Naive thymus-derived CD4-positive, alpha-beta T cell (primary cell): ENCODE measurements at regions of chr15 and their contacts with region 1.

Region 1: DNA sequence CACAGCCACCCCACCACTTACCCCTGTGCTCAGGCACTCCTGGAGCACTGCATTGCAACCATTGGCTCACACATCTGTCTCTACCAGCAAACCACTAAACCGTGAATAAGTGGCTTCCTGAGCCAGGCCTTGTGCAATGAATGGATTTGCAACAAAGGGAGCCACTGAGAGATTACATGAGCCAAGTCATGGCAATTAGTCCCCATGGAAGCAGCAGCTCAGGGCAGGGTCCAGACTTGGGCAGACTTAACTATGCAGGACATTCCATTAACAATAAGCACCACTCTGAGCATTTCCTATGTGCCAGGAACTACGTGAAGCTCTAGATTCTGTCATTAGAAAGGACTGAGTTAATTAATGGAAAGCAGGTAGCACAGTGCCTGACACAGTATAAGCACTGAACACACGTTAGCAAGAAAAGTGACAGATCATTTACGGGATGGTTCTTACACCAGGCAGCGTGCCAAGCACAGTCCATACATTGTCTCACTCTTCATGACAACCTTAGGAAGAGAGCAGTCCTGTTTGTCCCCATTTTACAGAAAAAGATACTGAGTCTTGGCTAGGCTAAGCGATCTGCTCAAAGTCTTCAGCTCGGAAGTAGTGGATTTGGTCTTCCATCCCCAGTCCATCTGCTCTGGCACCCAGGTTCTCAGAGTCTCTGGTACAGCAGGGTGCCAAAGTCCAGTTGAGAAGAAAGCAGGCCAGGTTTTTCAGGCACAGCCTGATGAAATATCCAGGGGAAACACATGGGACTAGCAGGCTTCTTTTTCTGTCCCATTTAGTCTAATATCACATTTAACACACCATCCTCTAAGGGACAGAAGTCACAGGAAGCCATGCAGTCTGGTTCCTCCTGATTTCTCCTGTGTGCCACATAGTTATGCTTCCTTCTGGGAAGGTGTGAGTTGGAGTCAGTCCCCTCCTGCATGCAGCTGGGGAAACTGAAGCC is 44.1 kb downstream of the LIPC start:
- DNase-seq: no peak
- ATAC-seq: no peak
- H3K4me3 ChIP-seq: no peak overlapping the region
- H3K4me3 Mint-ChIP-seq: peak overlapping the region in 8 of 10 donors; percentile 15 to 65 (median 42)
- H3K27ac ChIP-seq: peak overlapping the region; percentile 26
- H3K27ac Mint-ChIP-seq: peak overlapping the region; percentile 23 to 89 (median 75)
- H3K4me1 ChIP-seq: peaks cover 28 to 43% of the 10 kb centered on the region in 2 donors
- H3K4me1 Mint-ChIP-seq: peaks cover 33 to 70% (median 57%) of the 10 kb centered on the region in 7 donors
- H3K27me3 ChIP-seq: no peaks in the 10 kb centered on the region
- H3K27me3 Mint-ChIP-seq: no peaks in the 10 kb centered on the region

Region 2: GRCh38 chr15:58438956-58439355 is 36.9 kb before region 1 on chr15:
- CTCF ChIA-PET with region 1: no interaction called
- POLR2A ChIA-PET with region 1: no interaction called
- intact Hi-C with region 1: loop called in 1 of 2 experiments (anchors 5 kb)
- DNase-seq: peak in 5 of 9 donors; percentile 13 to 46 (median 28)
- ATAC-seq: peak; percentile 62
- H3K4me3 ChIP-seq: no peak overlapping the region
- H3K4me3 Mint-ChIP-seq: no peak overlapping the region
- H3K27ac ChIP-seq: no peak overlapping the region
- H3K27ac Mint-ChIP-seq: peak overlapping the region in 3 of 9 donors; percentile 25 to 70 (median 49)
- H3K4me1 ChIP-seq: no peaks in the 10 kb centered on the region
- H3K4me1 Mint-ChIP-seq: peaks cover 0 to 33% (median 9%) of the 10 kb centered on the region in 7 donors
- H3K27me3 ChIP-seq: no peaks in the 10 kb centered on the region
- H3K27me3 Mint-ChIP-seq: no peaks in the 10 kb centered on the region

Region 3: GRCh38 chr15:58457381-58457965 is 18.4 kb before region 1 on chr15:
- CTCF ChIA-PET with region 1: no interaction called
- POLR2A ChIA-PET with region 1: no interaction called
- intact Hi-C with region 1: loop called in 1 of 2 experiments (anchors 2 kb)
- DNase-seq: no peak
- ATAC-seq: no peak
- H3K4me3 ChIP-seq: no peak overlapping the region
- H3K4me3 Mint-ChIP-seq: peak overlapping the region in 1 of 10 donors; percentile 47
- H3K27ac ChIP-seq: no peak overlapping the region
- H3K27ac Mint-ChIP-seq: peak overlapping the region in 2 of 9 donors; percentile 16 to 78
- H3K4me1 ChIP-seq: peaks cover 11 to 23% of the 10 kb centered on the region in 2 donors
- H3K4me1 Mint-ChIP-seq: peaks cover 19 to 75% (median 49%) of the 10 kb centered on the region in 7 donors
- H3K27me3 ChIP-seq: no peaks in the 10 kb centered on the region
- H3K27me3 Mint-ChIP-seq: no peaks in the 10 kb centered on the region